Thyroid gland (tissue), 4 donors: ENCODE measurements at regions of chr6 and their contacts with region 1.

Region 1: GRCh38 chr6:43769526-43770416 is at the start of gene VEGFA:
- DNase-seq: peak; percentile 88 to 91
- H3K4me3 ChIP-seq: peak within 1 kb of the TSS; percentile 74 to 100 (median 83)
- H3K27ac ChIP-seq: peak within 1 kb of the TSS; percentile 93 to 98 (median 93)
- H3K4me1 ChIP-seq: peaks cover 5 to 9% of the 10 kb centered on the region in 2 donors
- H3K27me3 ChIP-seq: no peaks in the 10 kb centered on the region
- CTCF ChIP-seq: peak; percentile 87 to 99 (median 98)
- POLR2A ChIP-seq: peak; percentile 92 to 96
- total RNA-seq, gene VEGFA: 510 to 1,437 (median 630) TPM

Region 2: DNA sequence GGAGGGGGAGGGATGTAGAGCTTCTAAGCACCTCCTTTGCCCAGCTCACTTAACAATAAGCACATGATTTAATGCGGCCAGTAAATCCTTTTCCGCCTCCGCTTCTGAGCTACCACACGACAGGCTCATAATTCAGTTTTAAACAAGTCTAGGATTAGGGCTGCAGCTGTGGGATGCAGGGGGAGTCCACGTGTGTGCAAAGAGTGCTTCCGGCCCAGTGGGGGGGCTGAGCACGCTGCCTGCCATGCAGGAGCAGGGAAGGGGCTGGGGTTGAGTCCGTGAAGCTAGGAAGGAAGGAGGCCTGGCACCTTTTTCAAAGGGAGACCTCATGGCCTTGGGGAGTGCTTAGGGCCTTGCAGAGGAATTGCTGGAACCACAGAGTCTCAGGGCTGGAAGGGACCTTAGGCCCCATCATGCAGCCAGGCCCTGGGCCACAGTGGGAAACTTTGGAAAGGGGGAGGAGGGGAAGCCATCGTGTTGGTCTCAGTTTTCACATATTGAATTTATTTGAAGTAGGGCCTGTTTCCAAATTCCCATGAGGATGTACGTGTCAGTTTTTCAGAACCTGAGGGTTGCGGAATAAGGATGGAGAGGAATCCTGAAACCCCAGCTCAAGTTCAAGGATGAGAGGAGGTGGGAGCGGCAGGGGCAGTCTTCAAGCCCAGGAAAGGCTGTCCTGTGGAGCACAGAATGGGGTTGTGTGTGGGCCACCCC is 96.3 kb after region 1 on chr6:
- intact Hi-C with region 1: no loop called
- DNase-seq: no peak
- H3K4me3 ChIP-seq: no peak overlapping the region
- H3K27ac ChIP-seq: peak overlapping the region; percentile 66 to 92 (median 89)
- H3K4me1 ChIP-seq: peaks cover 67 to 77% of the 10 kb centered on the region in 2 donors
- H3K27me3 ChIP-seq: no peaks in the 10 kb centered on the region
- CTCF ChIP-seq: no peak
- POLR2A ChIP-seq: no peak

Region 3: DNA sequence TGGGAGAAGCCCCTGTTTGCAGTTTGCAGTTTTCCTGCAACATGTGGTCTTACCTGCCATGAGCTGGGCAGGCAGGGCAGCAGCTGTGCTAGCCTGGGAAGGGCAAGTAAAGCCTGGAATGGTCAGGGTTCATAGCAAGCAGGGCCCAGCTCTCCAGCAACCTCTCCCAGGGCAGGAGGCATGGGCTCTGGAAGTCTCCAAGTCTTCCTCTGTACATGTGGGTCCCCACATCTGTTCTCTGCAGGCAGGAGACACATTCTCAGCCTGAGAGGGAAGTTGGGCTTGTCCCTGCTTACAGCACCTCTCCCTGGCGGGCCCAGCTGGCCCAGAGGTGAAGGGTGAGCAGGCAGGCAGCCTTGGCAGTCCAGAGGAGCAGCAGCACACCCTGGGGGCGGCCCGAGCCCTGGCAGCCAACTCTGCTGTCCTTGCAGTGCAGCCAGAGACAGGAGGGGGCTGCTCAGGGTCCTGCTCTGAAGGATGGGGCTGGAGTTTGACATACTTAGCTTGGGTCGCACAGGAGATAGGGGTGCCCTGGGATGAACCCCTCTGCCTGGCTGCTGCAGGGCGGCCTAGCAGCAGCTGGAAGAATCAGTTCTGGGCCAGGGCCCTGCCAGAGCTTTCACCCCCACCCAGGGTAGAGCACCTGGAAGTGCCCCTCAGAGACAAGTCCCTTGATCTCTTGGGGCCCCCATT is 181.4 kb after region 1 on chr6:
- intact Hi-C with region 1: loop called (anchors 2 kb)
- DNase-seq: peak; percentile 92
- H3K4me3 ChIP-seq: no peak overlapping the region
- H3K27ac ChIP-seq: peak overlapping the region in 2 of 3 donors; percentile 43 to 45
- H3K4me1 ChIP-seq: peaks cover 5 to 32% of the 10 kb centered on the region in 2 donors
- H3K27me3 ChIP-seq: no peaks in the 10 kb centered on the region
- CTCF ChIP-seq: peak; percentile 48 to 98 (median 86)
- POLR2A ChIP-seq: no peak

Region 4: GRCh38 chr6:44080561-44081521 is 311.1 kb after region 1 on chr6:
- intact Hi-C with region 1: loop called (anchors 2 kb)
- DNase-seq: no peak
- H3K4me3 ChIP-seq: no peak overlapping the region
- H3K27ac ChIP-seq: no peak overlapping the region
- H3K4me1 ChIP-seq: peaks cover 0 to 12% of the 10 kb centered on the region in 2 donors
- H3K27me3 ChIP-seq: no peaks in the 10 kb centered on the region
- CTCF ChIP-seq: no peak
- POLR2A ChIP-seq: no peak

Region 5: GRCh38 chr6:44100088-44100550 is 330.3 kb after region 1 on chr6:
- intact Hi-C with region 1: no loop called
- DNase-seq: peak; percentile 30 to 31
- H3K4me3 ChIP-seq: no peak overlapping the region
- H3K27ac ChIP-seq: no peak overlapping the region
- H3K4me1 ChIP-seq: peaks cover 0 to 5% of the 10 kb centered on the region in 2 donors
- H3K27me3 ChIP-seq: no peaks in the 10 kb centered on the region
- CTCF ChIP-seq: peak in 5 of 6 experiments; percentile 10 to 56 (median 39)
- POLR2A ChIP-seq: no peak